ENCODE measurements at regions of chr12 and their contacts with region 1.

Region 1: GRCh38 chr12:110270125-110270962 is 10.7 kb upstream of the ATP2A2 start:
- DNase-seq: peak; percentile 58 to 86
- ATAC-seq: peak; percentile 86 to 89 (median 88)
- H3K4me3 ChIP-seq: peak overlapping the region; percentile 5
- H3K27ac ChIP-seq: peak overlapping the region; percentile 58
- H3K4me1 ChIP-seq: peaks cover 46% of the 10 kb centered on the region
- H3K27me3 ChIP-seq: no peaks in the 10 kb centered on the region
- CTCF ChIP-seq: no peak

Region 2: DNA sequence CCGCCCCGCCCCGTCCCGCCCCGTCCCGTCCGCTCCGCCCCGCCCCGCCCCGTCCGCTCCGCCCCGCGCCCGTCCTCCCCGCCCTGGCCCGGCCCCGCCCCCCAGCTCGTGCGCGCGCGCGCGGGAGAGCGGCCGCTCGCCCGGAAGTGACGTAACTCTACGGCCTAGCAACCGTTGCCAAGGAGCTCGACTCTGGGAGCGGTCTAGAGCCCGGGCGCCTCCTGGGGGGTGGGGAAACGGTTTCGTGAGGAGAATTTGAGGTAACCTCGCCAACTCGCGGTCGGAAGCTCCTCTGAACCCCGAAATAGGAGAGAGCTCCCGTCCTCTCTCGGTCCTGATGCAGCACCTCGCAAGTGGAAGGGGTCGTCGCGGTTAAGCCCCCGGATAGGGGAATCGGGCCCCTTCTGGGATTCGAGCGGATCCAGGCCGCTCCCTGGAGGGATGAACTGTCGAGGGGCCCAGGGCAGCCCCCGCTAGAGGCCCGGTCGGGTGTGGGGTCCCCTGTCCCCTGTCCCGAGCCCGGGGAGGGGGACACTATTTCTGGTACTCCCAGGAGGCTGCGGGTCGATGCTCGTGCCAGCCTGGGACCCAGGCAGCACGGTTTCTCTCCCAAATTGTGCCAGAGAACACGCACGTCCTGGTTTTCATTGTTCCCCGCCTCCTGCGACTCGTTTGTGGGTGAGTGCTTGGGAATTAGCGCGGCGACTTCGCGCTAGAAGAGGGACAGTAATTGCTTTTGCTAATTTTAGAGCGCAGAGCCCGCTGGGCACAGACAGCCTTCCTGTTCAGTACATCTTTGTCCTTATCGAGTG is 146.0 kb before region 1 on chr12 and contains the start of gene IFT81:
- intact Hi-C with region 1: no loop called
- DNase-seq: peak; percentile 96 to 97
- ATAC-seq: peak; percentile 95 to 99 (median 98)
- H3K4me3 ChIP-seq: peak within 1 kb of the TSS; percentile 100
- H3K27ac ChIP-seq: peak within 1 kb of the TSS; percentile 89
- H3K4me1 ChIP-seq: peaks cover 7% of the 10 kb centered on the region
- H3K27me3 ChIP-seq: no peaks in the 10 kb centered on the region
- CTCF ChIP-seq: no peak
- total RNA-seq, gene IFT81: 4.1 to 9.6 (median 5.3) TPM

Region 3: GRCh38 chr12:110234755-110235154 is 35.6 kb before region 1 on chr12:
- intact Hi-C with region 1: loop called in 1 of 2 experiments (anchors 5 kb)
- DNase-seq: no peak
- ATAC-seq: peak in 2 of 4 donors; percentile 52 to 57
- H3K4me3 ChIP-seq: peak overlapping the region; percentile 13
- H3K27ac ChIP-seq: peak overlapping the region; percentile 62
- H3K4me1 ChIP-seq: peaks cover 29% of the 10 kb centered on the region
- H3K27me3 ChIP-seq: no peaks in the 10 kb centered on the region
- CTCF ChIP-seq: no peak

Region 4: GRCh38 chr12:110289044-110289710 is 18.8 kb after region 1 on chr12:
- intact Hi-C with region 1: no loop called
- DNase-seq: no peak
- ATAC-seq: peak; percentile 48 to 79 (median 63)
- H3K4me3 ChIP-seq: peak overlapping the region; percentile 96
- H3K27ac ChIP-seq: peak overlapping the region; percentile 96
- H3K4me1 ChIP-seq: peaks cover 20% of the 10 kb centered on the region
- H3K27me3 ChIP-seq: no peaks in the 10 kb centered on the region
- CTCF ChIP-seq: no peak

Measured in psoas muscle (tissue), 8 donors.